Activated CD8-positive, alpha-beta T cell treated with anti-CD3 and anti-CD28 coated beads for 36 hours (primary cell): ENCODE measurements at regions of chr20 and their contacts with region 1.

Region 1: GRCh38 chr20:20860078-20860806 is 147.8 kb upstream of the RALGAPA2 start:
- DNase-seq: peak; percentile 94
- ATAC-seq: peak; percentile 77
- H3K4me3 Mint-ChIP-seq: no peak overlapping the region
- H3K27ac Mint-ChIP-seq: no peak overlapping the region
- H3K4me1 Mint-ChIP-seq: no peaks in the 10 kb centered on the region
- H3K27me3 Mint-ChIP-seq: peaks cover 4% of the 10 kb centered on the region
- CTCF ChIP-seq: peak; percentile 94

Region 2: DNA sequence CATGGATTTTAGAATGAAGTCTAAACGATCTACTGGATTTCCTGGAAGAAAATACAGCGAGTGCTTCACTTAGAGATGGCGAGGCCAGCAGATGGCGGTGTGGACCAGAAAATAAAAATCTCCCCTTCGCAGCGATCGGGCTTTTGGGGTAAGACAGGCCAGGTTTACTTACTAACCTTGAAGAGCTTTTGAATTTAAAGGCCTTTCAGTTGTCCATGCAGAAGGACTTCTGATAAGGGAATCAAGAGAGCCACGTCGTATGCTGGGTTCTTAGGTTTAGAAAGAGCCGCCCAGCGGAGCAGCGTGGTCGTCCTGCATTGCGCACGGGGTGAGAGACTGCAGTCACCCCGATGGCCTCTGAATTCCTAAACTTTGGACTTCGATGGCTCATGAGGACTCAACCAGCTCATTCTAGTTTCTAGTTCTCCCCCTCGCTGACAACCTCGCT is 22.6 kb before region 1 on chr20:
- CTCF ChIA-PET with region 1: interaction called, 42 read pairs
- POLR2A ChIA-PET with region 1: no interaction called
- intact Hi-C with region 1: no loop called
- DNase-seq: peak; percentile 71
- ATAC-seq: peak; percentile 42
- H3K4me3 Mint-ChIP-seq: no peak overlapping the region
- H3K27ac Mint-ChIP-seq: no peak overlapping the region
- H3K4me1 Mint-ChIP-seq: peaks cover 3% of the 10 kb centered on the region
- H3K27me3 Mint-ChIP-seq: peaks cover 7% of the 10 kb centered on the region
- CTCF ChIP-seq: peak; percentile 72

Region 3: DNA sequence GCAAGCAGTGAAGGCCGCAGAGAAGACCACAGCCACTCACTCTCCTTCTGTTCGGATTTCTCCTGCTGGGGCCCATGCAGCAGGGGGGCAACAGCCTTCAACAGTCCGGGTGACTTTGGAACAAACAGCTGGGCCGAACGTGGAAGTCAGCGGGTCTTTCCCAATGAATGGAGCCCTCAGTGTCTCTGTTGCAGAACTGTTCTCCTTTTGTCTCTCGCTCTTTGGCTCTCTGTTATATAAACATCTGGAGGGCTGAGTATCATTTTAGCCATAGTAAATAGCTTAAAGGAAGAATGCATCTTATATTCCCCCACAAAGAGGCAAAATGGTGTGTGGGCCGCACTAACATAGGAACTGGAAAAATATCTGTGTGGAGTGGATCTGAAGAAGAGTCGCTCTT is 11.1 kb before region 1 on chr20:
- CTCF ChIA-PET with region 1: interaction called, 18 read pairs
- POLR2A ChIA-PET with region 1: no interaction called
- intact Hi-C with region 1: no loop called
- DNase-seq: no peak
- ATAC-seq: no peak
- H3K4me3 Mint-ChIP-seq: no peak overlapping the region
- H3K27ac Mint-ChIP-seq: no peak overlapping the region
- H3K4me1 Mint-ChIP-seq: no peaks in the 10 kb centered on the region
- H3K27me3 Mint-ChIP-seq: peaks cover 2% of the 10 kb centered on the region
- CTCF ChIP-seq: no peak

Region 4: GRCh38 chr20:20875716-20876115 is 15.5 kb after region 1 on chr20:
- CTCF ChIA-PET with region 1: interaction called, 20 read pairs
- POLR2A ChIA-PET with region 1: interaction called, 3 read pairs
- intact Hi-C with region 1: no loop called
- DNase-seq: no peak
- ATAC-seq: no peak
- H3K4me3 Mint-ChIP-seq: no peak overlapping the region
- H3K27ac Mint-ChIP-seq: no peak overlapping the region
- H3K4me1 Mint-ChIP-seq: no peaks in the 10 kb centered on the region
- H3K27me3 Mint-ChIP-seq: peaks cover 11% of the 10 kb centered on the region
- CTCF ChIP-seq: no peak